SK-N-SH (cell line): ENCODE measurements at regions of chr2 and their contacts with region 1.

Region 1: DNA sequence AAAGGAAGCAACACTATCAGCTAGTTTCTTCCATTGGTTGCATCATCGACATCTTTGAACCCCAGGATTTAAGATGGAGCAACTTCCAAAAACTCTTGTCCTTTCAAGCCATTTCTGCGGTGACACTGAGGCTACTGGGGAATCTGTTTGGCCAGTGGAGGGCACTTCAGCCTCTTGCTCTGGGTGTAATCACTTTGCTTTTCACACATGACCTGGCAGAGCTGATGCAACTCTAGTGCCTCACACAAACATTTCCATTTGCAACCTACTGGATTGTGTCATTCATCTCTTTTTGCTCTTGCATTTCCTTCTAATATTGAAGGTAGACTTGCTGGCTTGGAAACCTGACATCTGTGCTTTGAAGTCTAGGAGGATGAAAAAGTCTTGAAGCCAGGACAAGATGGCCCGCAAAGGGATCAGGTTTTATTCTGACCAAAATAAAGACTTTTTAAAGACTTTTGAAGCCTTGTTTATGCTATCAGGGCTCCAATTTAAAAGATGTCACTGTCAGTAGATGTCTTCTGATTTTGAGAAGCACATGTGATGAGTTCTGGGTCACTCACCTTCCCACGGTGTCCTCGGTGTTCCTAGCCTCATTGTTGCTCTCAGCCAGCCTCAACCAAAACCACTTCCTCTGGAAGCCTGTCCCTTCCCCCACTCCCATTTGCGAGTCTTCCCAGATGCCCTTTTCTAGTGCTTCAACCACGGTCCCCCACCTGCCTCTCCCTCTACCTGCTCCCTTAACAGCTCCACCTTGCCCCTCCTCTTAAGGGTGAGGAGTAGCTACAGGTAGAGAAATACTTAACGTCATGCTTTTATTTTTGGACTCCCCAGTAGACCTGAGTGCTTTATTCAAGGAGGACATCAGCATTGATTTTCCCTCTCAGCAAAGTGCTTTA is 69.7 kb upstream of the KCNE4 start:
- DNase-seq: peak; percentile 31
- H3K4me3 ChIP-seq: no peak overlapping the region
- H3K27ac ChIP-seq: peak overlapping the region; percentile 42 to 48; a peak in 2 of 4 replicates
- H3K4me1 ChIP-seq: peaks cover 7 to 8% of the 10 kb centered on the region in 2 experiments; a peak in 2 of 4 replicates
- H3K27me3 ChIP-seq: no peaks in the 10 kb centered on the region
- CTCF ChIP-seq: peak; percentile 60
- EP300 ChIP-seq: no peak
- RAD21 ChIP-seq: peak; percentile 88

Region 2: GRCh38 chr2:222538535-222538934 is 443.7 kb before region 1 on chr2:
- CTCF ChIA-PET with region 1: no interaction called
- POLR2A ChIA-PET with region 1: no interaction called
- DNase-seq: no peak
- H3K4me3 ChIP-seq: no peak overlapping the region
- H3K27ac ChIP-seq: no peak overlapping the region
- H3K4me1 ChIP-seq: no peaks in the 10 kb centered on the region
- H3K27me3 ChIP-seq: no peaks in the 10 kb centered on the region; the same call in 1 of the 2 replicates
- CTCF ChIP-seq: no peak
- EP300 ChIP-seq: no peak
- RAD21 ChIP-seq: no peak

Region 3: GRCh38 chr2:222993920-222994650 is 11.8 kb after region 1 on chr2:
- CTCF ChIA-PET with region 1: interaction called, 20 read pairs
- POLR2A ChIA-PET with region 1: interaction called, 9 read pairs
- DNase-seq: peak; percentile 47
- H3K4me3 ChIP-seq: peak overlapping the region; percentile 6 to 14; a peak in 2 of 4 replicates
- H3K27ac ChIP-seq: peak overlapping the region; percentile 98 to 99
- H3K4me1 ChIP-seq: peaks cover 22% of the 10 kb centered on the region in 2 experiments
- H3K27me3 ChIP-seq: no peaks in the 10 kb centered on the region
- CTCF ChIP-seq: no peak
- EP300 ChIP-seq: peak; percentile 57 to 81
- RAD21 ChIP-seq: peak; percentile 32; the same call in 1 of the 2 replicates

Region 4: GRCh38 chr2:223041527-223042109 is 59.4 kb after region 1 on chr2:
- CTCF ChIA-PET with region 1: no interaction called
- POLR2A ChIA-PET with region 1: no interaction called
- DNase-seq: no peak
- H3K4me3 ChIP-seq: no peak overlapping the region
- H3K27ac ChIP-seq: peak overlapping the region; percentile 62 to 99; a peak in 3 of 4 replicates
- H3K4me1 ChIP-seq: peaks cover 2 to 44% of the 10 kb centered on the region in 2 experiments; a peak in 3 of 4 replicates
- H3K27me3 ChIP-seq: no peaks in the 10 kb centered on the region
- CTCF ChIP-seq: no peak
- EP300 ChIP-seq: peak in 1 of 2 experiments; percentile 37; a peak in 1 of 4 replicates
- RAD21 ChIP-seq: no peak

Region 5: DNA sequence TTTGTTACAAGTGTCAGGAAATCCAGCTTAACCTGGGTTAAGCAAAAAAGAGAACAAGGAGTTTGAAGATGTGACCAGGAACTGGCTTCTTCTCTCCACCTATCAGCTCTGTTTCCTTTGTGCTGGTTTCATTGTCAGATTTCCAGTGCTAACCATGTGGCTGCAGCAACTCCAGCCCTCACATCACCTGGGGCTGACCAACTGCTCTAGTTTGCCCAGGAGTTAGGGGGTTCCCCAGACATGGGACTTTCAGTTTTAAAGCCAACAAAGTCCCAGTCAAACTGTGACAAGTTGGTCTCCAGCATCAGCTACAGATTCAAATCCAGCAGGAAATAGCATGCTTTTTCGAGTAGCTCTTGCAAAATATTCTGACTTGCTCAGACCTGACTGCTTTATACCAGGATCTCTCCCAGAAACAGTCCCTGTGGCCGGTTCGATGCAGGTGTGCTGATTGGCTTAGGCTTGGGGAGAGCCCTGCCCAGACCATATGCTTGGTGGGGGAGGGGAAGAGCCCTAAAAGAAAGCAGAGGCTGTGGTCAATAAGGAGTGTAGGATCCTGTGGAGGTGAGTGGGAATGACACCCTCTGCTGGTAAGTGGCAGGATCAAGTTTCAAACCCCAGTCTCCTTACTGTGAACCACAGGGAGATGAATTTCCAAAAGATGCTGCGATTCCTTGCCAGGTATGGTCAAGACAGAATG is 119.2 kb after region 1 on chr2:
- CTCF ChIA-PET with region 1: interaction called, 29 read pairs
- POLR2A ChIA-PET with region 1: no interaction called
- DNase-seq: peak; percentile 42
- H3K4me3 ChIP-seq: no peak overlapping the region
- H3K27ac ChIP-seq: peak overlapping the region; percentile 59 to 72; a peak in 3 of 4 replicates
- H3K4me1 ChIP-seq: peaks cover 16 to 33% of the 10 kb centered on the region in 2 experiments; a peak in 3 of 4 replicates
- H3K27me3 ChIP-seq: no peaks in the 10 kb centered on the region
- CTCF ChIP-seq: peak; percentile 53
- EP300 ChIP-seq: no peak
- RAD21 ChIP-seq: peak; percentile 62

Region 6: GRCh38 chr2:223601932-223602666 is 619.8 kb after region 1 on chr2 and contains the start of gene SCG2:
- CTCF ChIA-PET with region 1: interaction called, 29 read pairs
- POLR2A ChIA-PET with region 1: no interaction called
- DNase-seq: peak; percentile 80
- H3K4me3 ChIP-seq: peak within 1 kb of the TSS; percentile 66 to 74
- H3K27ac ChIP-seq: peak within 1 kb of the TSS; percentile 94 to 95
- H3K4me1 ChIP-seq: peaks cover 22 to 26% of the 10 kb centered on the region in 2 experiments
- H3K27me3 ChIP-seq: no peaks in the 10 kb centered on the region
- CTCF ChIP-seq: peak; percentile 60
- EP300 ChIP-seq: no peak; a peak in 1 of 4 replicates
- RAD21 ChIP-seq: peak; percentile 65
- polyA plus RNA-seq, gene SCG2: 373 and 509 TPM in 2 replicates

Region 7: GRCh38 chr2:223797811-223798721 is 815.8 kb after region 1 on chr2:
- CTCF ChIA-PET with region 1: interaction called, 19 read pairs
- POLR2A ChIA-PET with region 1: no interaction called
- DNase-seq: peak; percentile 48
- H3K4me3 ChIP-seq: peak overlapping the region in 1 of 2 experiments; percentile 29; a peak in 1 of 4 replicates
- H3K27ac ChIP-seq: peak overlapping the region in 1 of 2 experiments; percentile 69; a peak in 2 of 4 replicates
- H3K4me1 ChIP-seq: peaks cover 0 to 47% of the 10 kb centered on the region in 2 experiments; a peak in 2 of 4 replicates
- H3K27me3 ChIP-seq: no peaks in the 10 kb centered on the region
- CTCF ChIP-seq: peak; percentile 81
- EP300 ChIP-seq: no peak
- RAD21 ChIP-seq: peak; percentile 94